Panc1 (cell line): ENCODE measurements at regions of chr16 and their contacts with region 1.

Region 1: DNA sequence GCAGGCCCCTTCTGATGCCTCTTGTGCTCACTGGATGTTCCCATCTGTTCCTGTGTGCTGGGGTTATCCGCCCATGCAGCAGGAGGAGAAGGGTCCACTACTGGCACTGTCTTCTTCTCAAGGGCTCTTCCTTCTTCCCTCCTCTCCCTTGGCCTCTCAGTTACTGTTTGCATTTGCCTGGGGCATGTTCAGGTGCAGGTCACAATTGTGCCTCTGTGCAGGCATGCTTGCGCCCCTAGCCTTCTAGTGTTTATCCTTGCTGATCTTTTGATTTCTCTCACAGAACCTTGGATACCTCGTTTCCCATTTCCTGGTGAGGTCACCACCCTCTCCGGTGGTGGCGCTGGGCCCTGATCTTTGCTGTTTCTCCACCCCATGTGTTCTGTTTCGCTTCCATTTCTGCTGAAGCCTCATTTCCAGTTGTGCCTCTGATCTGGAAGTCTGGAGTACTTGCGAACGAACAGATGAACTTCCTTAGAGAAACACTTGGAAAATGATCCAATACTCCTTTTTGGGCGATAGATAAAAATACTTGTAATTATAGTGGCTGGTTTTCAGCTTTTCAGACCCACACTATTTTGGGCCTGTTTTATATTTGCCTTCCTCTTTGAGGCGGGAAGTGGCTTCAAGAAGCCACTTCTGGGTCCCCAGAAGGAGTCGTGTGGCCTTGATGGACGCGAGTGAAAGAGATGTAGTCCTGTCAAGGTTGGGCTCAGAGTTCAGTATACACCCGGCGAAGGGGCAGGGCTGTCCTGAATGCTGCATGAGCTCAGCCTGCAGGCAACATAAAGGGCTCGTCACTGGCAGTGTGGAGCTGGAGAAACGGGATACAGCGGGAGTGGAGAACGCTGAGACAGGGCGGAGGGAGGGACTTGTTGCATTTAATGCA is 312.9 kb downstream of the SNX29 start:
- DNase-seq: no peak
- ATAC-seq: no peak
- H3K4me3 ChIP-seq: no peak overlapping the region
- H3K27ac ChIP-seq: no peak overlapping the region
- H3K4me1 ChIP-seq: no peaks in the 10 kb centered on the region
- H3K27me3 ChIP-seq: no peaks in the 10 kb centered on the region
- CTCF ChIP-seq: no peak

Region 2: DNA sequence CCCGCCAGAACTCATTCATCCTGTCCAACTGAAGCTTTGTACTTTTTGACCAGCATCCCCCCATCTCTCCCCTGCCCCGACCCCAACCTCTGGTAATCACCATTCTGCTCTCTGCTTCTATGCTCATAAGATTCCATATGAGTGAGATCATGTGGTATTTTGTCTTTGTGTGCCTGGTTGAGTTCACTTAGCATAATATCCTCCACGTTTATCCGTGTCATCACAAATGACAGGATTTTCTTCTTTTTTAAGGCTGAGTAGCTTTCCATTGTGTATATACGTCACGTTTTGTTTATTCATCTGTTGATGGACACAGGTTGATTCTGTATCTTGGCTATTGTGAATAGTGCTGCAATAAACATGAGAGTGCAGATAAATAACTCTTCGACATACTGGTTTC is 33.9 kb before region 1 on chr16:
- CTCF ChIA-PET with region 1: no interaction called
- POLR2A ChIA-PET with region 1: interaction called, 11 read pairs
- in situ Hi-C with region 1: no loop called
- intact Hi-C with region 1: no loop called
- DNase-seq: no peak
- ATAC-seq: no peak
- H3K4me3 ChIP-seq: no peak overlapping the region
- H3K27ac ChIP-seq: no peak overlapping the region
- H3K4me1 ChIP-seq: no peaks in the 10 kb centered on the region
- H3K27me3 ChIP-seq: no peaks in the 10 kb centered on the region
- CTCF ChIP-seq: no peak

Region 3: DNA sequence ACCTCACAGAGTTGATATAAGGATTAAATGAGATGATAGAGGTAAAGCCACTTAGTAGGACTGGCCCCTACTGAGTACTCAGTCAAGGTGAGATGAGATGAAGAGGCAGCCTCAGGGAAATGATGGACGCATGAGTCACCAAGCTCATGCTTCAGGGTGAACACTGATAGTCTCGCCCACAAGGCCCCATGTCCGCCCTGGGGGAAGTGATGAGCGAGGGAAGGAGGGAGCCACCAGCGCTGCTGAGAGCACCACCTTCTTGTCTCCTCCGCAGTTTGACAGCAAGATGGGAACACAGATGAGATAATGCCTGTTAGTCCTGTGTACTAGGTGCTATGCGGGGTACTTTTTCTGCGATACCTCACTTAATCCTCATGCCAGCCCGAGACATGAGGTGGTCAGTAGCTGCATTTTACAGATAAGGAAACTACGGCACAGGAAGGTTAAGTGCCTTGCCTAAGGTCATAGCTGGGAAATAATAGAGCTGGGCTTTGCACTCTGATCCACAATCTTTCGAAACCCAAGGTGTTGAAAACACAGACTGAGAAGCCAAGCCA is 131.3 kb after region 1 on chr16:
- CTCF ChIA-PET with region 1: no interaction called
- POLR2A ChIA-PET with region 1: no interaction called
- in situ Hi-C with region 1: no loop called
- intact Hi-C with region 1: no loop called
- DNase-seq: no peak
- ATAC-seq: no peak
- H3K4me3 ChIP-seq: no peak overlapping the region
- H3K27ac ChIP-seq: no peak overlapping the region
- H3K4me1 ChIP-seq: no peaks in the 10 kb centered on the region
- H3K27me3 ChIP-seq: no peaks in the 10 kb centered on the region
- CTCF ChIP-seq: no peak